Aorta (tissue), 5 donors: ENCODE measurements at regions of chr21 and their contacts with region 1.

Region 1: DNA sequence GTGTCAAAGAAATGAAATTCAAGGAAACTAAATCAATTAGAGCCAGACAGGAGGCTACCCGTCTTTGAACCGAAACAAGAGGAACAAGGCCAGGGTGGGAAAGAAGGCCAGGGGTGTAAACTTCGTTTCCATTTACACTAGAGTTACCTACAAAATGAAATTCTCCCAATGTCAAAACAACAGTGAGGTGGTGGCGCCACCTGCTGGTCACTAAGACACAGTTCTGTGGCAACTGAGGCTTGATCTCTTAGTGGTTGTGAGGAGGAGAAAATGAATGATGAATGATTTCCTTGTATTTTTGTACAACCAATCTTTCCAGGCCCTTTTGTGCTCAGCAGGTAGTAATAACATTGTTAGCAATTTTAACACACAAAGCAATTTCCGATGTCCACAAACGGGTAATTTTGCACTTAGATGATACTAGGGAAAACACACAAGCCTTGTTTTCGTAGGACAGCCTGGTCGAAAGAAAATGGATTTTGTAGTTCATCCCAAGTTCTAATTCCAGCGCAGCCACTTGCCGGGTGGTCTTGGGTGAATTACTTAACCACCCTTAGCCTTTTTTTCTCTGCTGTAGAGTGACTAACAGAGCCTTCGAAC is 54.8 kb upstream of the SOD1 start:
- DNase-seq: peak; percentile 60 to 88
- ATAC-seq: peak; percentile 73
- H3K4me3 ChIP-seq: no peak overlapping the region
- H3K27ac ChIP-seq: no peak overlapping the region
- H3K4me1 ChIP-seq: no peaks in the 10 kb centered on the region
- H3K27me3 ChIP-seq: no peaks in the 10 kb centered on the region

Region 2: GRCh38 chr21:31098576-31099005 is 506.1 kb before region 1 on chr21:
- intact Hi-C with region 1: loop called in 1 of 2 experiments (anchors 5 kb)
- DNase-seq: peak; percentile 73 to 88
- ATAC-seq: peak; percentile 77
- H3K4me3 ChIP-seq: no peak overlapping the region
- H3K27ac ChIP-seq: no peak overlapping the region
- H3K4me1 ChIP-seq: no peaks in the 10 kb centered on the region
- H3K27me3 ChIP-seq: no peaks in the 10 kb centered on the region

Region 3: GRCh38 chr21:31248601-31249000 is 356.1 kb before region 1 on chr21:
- intact Hi-C with region 1: no loop called
- DNase-seq: no peak
- ATAC-seq: no peak
- H3K4me3 ChIP-seq: no peak overlapping the region
- H3K27ac ChIP-seq: no peak overlapping the region
- H3K4me1 ChIP-seq: no peaks in the 10 kb centered on the region
- H3K27me3 ChIP-seq: no peaks in the 10 kb centered on the region

Region 4: GRCh38 chr21:31509194-31510017 is 95.3 kb before region 1 on chr21:
- intact Hi-C with region 1: no loop called
- DNase-seq: no peak
- ATAC-seq: no peak
- H3K4me3 ChIP-seq: no peak overlapping the region
- H3K27ac ChIP-seq: no peak overlapping the region
- H3K4me1 ChIP-seq: no peaks in the 10 kb centered on the region
- H3K27me3 ChIP-seq: no peaks in the 10 kb centered on the region